Common myeloid progenitor, CD34-positive (primary cell): ENCODE measurements at regions of chr11 and their contacts with region 1.

Region 1: DNA sequence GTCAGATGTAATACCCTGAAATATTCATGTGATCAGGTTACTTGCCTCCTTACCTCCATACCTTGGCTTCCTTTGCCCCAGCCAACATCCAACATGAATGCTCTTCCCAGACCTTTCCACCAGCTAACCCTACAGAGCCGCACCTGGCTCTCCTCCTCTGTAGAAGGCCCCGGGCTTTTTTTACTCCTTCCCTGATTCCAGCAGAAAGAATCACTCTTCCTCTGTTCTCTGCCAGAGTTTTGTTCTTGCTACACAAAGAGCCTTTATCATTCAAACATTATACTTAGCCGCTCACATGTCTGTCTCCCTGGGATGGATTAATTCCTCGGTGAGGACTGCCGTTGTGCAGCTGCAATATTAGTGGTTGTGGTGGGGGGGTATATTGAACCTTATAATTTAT is 116.8 kb upstream of the GRAMD1B start:
- DNase-seq: no peak
- H3K4me3 ChIP-seq: no peak overlapping the region
- H3K27ac ChIP-seq: no peak overlapping the region
- H3K4me1 ChIP-seq: peaks cover 0 to under 1% (median 0%) of the 10 kb centered on the region in 4 experiments
- H3K27me3 ChIP-seq: peaks cover 0 to 2% (median 0%) of the 10 kb centered on the region in 5 experiments

Region 2: GRCh38 chr11:123273616-123274015 is 39.6 kb before region 1 on chr11:
- CTCF ChIA-PET with region 1: no interaction called
- POLR2A ChIA-PET with region 1: no interaction called
- DNase-seq: no peak
- H3K4me3 ChIP-seq: no peak overlapping the region
- H3K27ac ChIP-seq: no peak overlapping the region
- H3K4me1 ChIP-seq: no peaks in the 10 kb centered on the region
- H3K27me3 ChIP-seq: no peaks in the 10 kb centered on the region

Region 3: GRCh38 chr11:123301696-123302400 is 11.4 kb before region 1 on chr11:
- CTCF ChIA-PET with region 1: interaction called, 11 read pairs
- POLR2A ChIA-PET with region 1: interaction called, 3 read pairs
- DNase-seq: peak; percentile 47 to 70 (median 67)
- H3K4me3 ChIP-seq: peak overlapping the region; percentile 13 to 66 (median 54)
- H3K27ac ChIP-seq: no peak overlapping the region
- H3K4me1 ChIP-seq: peaks cover 11 to 42% (median 39%) of the 10 kb centered on the region in 4 experiments
- H3K27me3 ChIP-seq: peaks cover 0 to 3% (median 0%) of the 10 kb centered on the region in 5 experiments

Region 4: DNA sequence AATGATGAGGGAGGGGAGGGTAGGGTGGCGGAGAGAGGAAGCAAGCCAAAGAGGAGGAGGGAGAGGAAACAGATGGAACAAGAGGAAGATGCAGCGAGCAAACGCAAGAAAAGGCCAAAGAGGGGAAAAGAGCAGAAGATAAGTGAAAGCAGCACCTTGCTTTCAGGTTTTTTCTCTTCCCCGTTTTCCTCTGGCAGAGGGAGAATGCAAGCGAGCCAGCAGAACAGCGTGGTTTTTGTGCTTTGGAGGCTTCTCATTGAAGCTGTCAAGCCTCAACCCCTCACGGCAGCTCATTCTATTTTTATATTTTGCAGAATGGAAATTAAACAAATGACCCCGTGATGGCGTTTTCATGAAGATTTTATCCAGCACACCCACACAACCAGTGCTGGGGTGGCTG is 49.7 kb after region 1 on chr11:
- CTCF ChIA-PET with region 1: no interaction called
- POLR2A ChIA-PET with region 1: no interaction called
- DNase-seq: peak in 2 of 3 donors; percentile 52 to 64
- H3K4me3 ChIP-seq: peak overlapping the region in 3 of 7 experiments; percentile 23 to 53 (median 44)
- H3K27ac ChIP-seq: no peak overlapping the region
- H3K4me1 ChIP-seq: peaks cover 11 to 41% (median 27%) of the 10 kb centered on the region in 4 experiments
- H3K27me3 ChIP-seq: peaks cover 0 to 18% (median 5%) of the 10 kb centered on the region in 5 experiments